Activated CD4-positive, alpha-beta T cell treated with anti-CD3 and anti-CD28 coated beads, Interleukin-2, amount 10 ng/mL, durations not matched to agents 24 days and 14 days (primary cell): ENCODE measurements at regions of chr1 and their contacts with region 1.

Region 1: DNA sequence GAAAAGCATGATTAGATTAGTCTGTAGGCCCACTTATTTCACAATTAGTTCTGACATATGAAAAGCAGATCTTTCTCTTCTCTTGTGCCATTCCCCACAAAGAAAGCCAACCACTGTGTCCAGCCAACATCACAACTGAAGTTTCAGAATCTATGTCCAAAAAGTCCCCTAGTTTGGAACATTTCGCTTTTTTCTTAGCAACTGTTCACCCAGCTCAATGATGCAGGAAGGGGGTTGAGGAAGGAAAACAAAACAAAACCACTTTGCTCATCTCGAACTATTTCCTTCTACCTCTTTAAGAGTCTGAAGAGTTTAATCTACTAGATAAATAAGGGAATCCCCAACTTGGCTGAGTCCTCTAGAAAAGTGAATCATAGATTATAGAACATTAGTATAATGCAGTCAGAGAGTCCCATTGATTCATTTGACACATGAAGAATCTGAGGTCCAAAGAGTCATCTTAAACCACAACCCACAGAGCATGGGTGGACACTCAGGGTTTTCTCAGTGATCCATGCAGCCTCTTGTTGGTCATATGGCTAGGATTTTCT is 159.3 kb upstream of the SGIP1 start:
- DNase-seq: peak; percentile 76
- H3K4me3 Mint-ChIP-seq: peak overlapping the region; percentile 82
- H3K27ac Mint-ChIP-seq: peak overlapping the region; percentile 94
- H3K4me1 Mint-ChIP-seq: peaks cover 59% of the 10 kb centered on the region
- H3K27me3 Mint-ChIP-seq: no peaks in the 10 kb centered on the region

Region 2: GRCh38 chr1:65213271-65214023 is 1161.2 kb before region 1 on chr1:
- intact Hi-C with region 1: loop called (anchors 10 kb)
- DNase-seq: peak; percentile 63
- H3K4me3 Mint-ChIP-seq: peak overlapping the region; percentile 72
- H3K27ac Mint-ChIP-seq: peak overlapping the region; percentile 93
- H3K4me1 Mint-ChIP-seq: peaks cover 69% of the 10 kb centered on the region
- H3K27me3 Mint-ChIP-seq: no peaks in the 10 kb centered on the region

Region 3: DNA sequence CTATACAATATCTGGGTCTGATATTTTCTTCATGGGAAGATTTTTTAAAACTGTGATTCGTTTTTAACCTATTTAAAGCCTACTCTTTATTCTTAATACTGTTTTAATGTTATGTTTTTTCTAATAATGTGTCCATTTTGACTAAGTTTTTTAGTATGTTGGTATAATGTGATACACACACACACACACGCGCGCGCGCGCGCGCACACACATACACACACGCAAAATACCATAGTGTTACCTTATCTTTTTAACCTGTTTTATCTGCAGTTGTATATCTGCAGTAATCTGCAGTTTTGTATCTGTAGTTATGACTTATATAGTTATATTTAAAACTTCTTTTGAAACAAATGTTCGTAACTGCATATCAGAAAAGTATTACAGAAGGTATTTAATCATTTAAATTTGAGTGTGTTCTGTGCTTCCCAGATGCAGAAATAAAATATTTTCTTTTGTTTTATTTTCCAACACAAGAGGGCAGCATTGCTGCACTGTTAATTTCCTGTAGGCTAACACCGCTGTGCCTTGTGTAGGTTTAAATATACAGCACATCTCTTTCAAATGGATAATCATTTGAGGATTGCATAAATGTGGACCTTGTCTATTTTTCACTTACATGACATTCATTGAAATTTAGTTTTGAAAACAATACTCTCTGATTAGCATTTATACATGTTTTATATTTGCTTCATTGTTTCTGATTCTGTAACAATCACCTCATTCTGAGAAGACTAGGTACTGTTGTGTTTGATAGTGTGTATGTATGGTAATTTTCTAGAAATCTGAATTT is 415.9 kb before region 1 on chr1:
- intact Hi-C with region 1: loop called (anchors 10 kb)
- DNase-seq: peak; percentile 82
- H3K4me3 Mint-ChIP-seq: no peak overlapping the region
- H3K27ac Mint-ChIP-seq: no peak overlapping the region
- H3K4me1 Mint-ChIP-seq: peaks cover 4% of the 10 kb centered on the region
- H3K27me3 Mint-ChIP-seq: peaks cover 3% of the 10 kb centered on the region

Region 4: DNA sequence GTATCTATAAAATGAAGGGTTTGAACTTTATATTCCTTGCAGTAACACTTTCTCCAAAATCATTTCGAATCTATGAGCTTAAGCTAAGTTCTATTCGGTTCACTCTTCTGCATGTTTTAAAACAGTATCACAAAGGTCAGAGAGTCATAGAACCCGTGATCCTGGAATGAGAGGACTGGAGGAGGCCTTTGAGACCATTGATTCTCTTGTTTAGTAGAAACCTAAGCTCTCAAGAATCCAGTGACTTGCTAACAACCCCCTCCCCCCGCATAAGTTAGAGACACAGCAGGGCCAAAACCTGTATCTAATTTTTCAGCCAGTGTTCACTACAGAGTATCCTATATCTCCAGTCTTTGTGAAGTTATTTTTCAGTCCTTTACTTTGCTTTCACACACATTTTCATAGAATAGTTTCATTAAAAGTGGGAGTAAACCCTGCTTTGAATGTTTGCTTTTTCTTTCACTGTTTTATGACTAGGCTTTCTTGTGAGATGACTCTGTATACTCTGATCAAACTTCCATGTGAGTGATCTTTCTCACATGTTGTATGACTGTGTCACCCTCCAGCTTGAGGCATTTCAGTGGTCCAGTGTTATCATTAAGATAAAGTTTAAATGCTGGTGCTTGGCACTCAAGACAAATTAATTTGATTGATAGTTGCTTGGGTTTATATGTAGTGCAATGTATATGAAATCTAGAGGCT is 116.1 kb before region 1 on chr1:
- intact Hi-C with region 1: loop called (anchors 1 kb)
- DNase-seq: no peak
- H3K4me3 Mint-ChIP-seq: no peak overlapping the region
- H3K27ac Mint-ChIP-seq: peak overlapping the region; percentile 59
- H3K4me1 Mint-ChIP-seq: peaks cover 57% of the 10 kb centered on the region
- H3K27me3 Mint-ChIP-seq: no peaks in the 10 kb centered on the region

Region 5: GRCh38 chr1:66331657-66332547 is 42.7 kb before region 1 on chr1:
- intact Hi-C with region 1: loop called (anchors 1 kb)
- DNase-seq: peak; percentile 82
- H3K4me3 Mint-ChIP-seq: peak overlapping the region; percentile 98
- H3K27ac Mint-ChIP-seq: peak overlapping the region; percentile 97
- H3K4me1 Mint-ChIP-seq: peaks cover 56% of the 10 kb centered on the region
- H3K27me3 Mint-ChIP-seq: no peaks in the 10 kb centered on the region

Region 6: GRCh38 chr1:66436378-66437145 is 61.9 kb after region 1 on chr1:
- intact Hi-C with region 1: loop called (anchors 1 kb)
- DNase-seq: peak; percentile 80
- H3K4me3 Mint-ChIP-seq: no peak overlapping the region
- H3K27ac Mint-ChIP-seq: peak overlapping the region; percentile 7
- H3K4me1 Mint-ChIP-seq: peaks cover 33% of the 10 kb centered on the region
- H3K27me3 Mint-ChIP-seq: no peaks in the 10 kb centered on the region

Region 7: DNA sequence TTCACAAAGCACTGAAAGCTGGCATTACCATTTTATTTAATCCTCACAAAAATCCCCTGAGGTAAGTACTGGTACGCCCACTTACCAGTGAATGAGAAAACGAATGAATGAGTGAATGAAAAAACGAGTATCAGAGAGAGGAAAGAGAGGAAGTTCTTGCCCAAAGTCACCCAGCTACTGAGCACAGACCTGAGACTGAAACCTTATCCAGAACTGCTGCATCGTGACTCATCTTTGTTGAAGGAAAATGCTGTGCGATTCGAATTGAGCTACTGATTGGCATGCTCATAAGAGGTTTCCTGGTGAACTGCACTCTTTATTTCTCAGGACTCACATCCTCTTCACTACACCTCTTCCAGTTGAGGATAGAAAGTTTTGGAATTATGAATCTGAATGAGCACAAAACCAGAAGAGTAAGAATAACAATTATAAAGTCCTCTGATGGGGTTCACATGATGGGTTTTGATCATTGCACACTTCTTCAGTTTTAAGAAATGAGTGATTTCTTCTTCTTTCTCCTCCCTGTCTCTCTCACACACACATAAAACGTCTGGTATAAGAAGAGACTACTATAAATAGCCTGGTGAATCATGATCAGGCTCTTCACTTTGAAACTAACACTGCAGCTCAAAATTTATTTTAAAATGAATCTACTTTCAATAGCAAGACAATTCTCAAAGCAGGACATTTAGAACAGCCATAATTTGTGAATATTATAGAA is 965.1 kb after region 1 on chr1:
- intact Hi-C with region 1: loop called (anchors 10 kb)
- DNase-seq: peak; percentile 85
- H3K4me3 Mint-ChIP-seq: peak overlapping the region; percentile 68
- H3K27ac Mint-ChIP-seq: peak overlapping the region; percentile 94
- H3K4me1 Mint-ChIP-seq: peaks cover 77% of the 10 kb centered on the region
- H3K27me3 Mint-ChIP-seq: no peaks in the 10 kb centered on the region